ENCODE measurements at regions of chr5 and their contacts with region 1.

Region 1: GRCh38 chr5:141878711-141879425 is 658 bp upstream of the PCDH1 start:
- DNase-seq: peak; percentile 78 to 81
- ATAC-seq: peak; percentile 90 to 92
- H3K4me3 ChIP-seq: peak overlapping the region; percentile 55 to 93 (median 72)
- H3K27ac ChIP-seq: peak overlapping the region; percentile 57 to 82 (median 74)
- H3K4me1 ChIP-seq: peaks cover 28 to 30% of the 10 kb centered on the region in 2 donors
- H3K27me3 ChIP-seq: peaks cover 40 to 55% (median 50%) of the 10 kb centered on the region in 3 donors
- CTCF ChIP-seq: peak; percentile 86 to 98 (median 95)
- POLR2A ChIP-seq: no peak

Region 2: DNA sequence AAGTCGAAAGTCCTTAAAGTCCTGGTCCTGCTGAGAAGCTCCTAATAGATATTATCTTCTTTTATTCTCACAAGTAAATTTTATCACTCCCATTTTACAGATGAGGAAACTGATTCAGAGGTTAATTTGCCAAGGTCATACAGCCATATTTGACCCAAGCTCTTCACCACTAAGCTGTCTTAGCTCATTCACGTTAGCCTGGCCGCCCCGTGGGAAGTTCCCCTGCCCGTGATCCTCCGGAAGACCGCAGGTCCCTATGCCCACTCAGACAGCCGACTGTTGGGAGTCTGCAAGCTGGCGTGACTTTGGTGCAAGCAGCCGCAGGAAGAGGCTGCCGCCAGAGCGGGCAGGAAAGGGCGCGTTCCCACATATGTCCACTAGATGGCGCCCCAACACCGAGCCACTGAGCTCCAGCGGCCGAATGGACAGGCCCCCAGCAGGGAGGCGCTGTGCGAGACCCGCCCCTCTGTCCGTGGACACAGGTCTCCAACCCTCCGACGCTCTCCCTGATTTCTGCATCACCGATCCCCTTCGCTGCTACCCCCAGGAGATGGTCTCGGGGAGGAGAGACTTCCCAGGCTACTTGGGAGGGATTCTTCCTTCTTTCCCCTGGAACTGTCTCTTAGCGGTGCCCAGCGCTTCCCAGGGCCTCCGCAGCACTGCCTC is 186.9 kb before region 1 on chr5:
- in situ Hi-C with region 1: loop called in 1 of 4 experiments (anchors 10 kb)
- intact Hi-C with region 1: loop called (anchors 1 kb)
- DNase-seq: peak; percentile 48 to 69
- ATAC-seq: peak; percentile 88 to 96
- H3K4me3 ChIP-seq: peak overlapping the region in 3 of 4 donors; percentile 30 to 50 (median 43)
- H3K27ac ChIP-seq: no peak overlapping the region
- H3K4me1 ChIP-seq: peaks cover 0 to 4% of the 10 kb centered on the region in 2 donors
- H3K27me3 ChIP-seq: no peaks in the 10 kb centered on the region
- CTCF ChIP-seq: peak; percentile 94 to 99 (median 98)
- POLR2A ChIP-seq: no peak

Region 3: GRCh38 chr5:141765896-141766551 is 112.8 kb before region 1 on chr5:
- in situ Hi-C with region 1: no loop called
- intact Hi-C with region 1: loop called (anchors 5 kb)
- DNase-seq: no peak
- ATAC-seq: no peak
- H3K4me3 ChIP-seq: no peak overlapping the region
- H3K27ac ChIP-seq: no peak overlapping the region
- H3K4me1 ChIP-seq: no peaks in the 10 kb centered on the region
- H3K27me3 ChIP-seq: peaks cover 0 to 5% (median 0%) of the 10 kb centered on the region in 3 donors
- CTCF ChIP-seq: no peak
- POLR2A ChIP-seq: no peak

Region 4: DNA sequence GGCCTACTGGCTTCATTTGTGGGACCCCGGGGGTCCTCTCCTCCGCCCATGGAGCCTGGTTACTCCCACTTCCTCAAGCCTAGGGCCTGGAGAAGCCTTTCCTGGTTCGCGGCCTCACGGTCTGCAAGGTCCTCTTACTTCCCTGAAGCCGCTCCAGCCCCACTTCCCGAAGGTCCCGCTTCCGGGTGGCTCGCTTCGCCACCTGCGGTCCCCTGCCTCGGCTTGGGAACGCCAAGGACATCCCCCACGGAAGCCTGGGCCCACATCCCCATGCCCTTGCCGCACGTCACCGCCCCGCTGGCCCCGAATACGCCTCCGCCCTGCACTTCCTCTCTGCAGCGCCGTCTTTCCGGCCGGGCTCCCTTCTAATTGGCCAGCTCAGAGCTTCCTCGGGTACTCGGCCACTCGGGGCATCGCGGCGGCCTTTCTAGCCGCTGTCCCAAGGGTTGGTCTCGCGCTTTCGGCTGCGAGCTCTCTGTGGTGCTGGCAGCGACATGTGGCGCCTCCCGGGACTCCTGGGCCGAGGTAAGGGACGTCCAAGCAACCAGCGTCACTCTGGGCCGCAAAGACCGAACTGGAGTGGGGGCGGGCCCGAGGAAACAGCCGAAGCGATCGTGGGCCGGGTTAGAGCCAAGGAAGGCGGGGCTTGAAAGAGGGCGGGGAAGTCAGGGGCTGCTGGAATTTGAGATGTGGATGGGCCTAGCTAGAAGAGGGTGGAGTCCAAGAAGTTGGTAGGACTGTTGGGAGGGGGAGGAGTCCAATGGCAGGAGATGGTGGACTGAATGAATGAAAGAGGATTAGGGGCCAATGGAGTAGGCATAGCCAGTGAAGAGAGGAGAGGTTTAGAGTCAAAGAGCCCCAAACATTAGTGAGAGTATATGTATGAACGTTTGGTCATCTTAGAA is 44.8 kb after region 1 on chr5 and contains the start of gene DELE1:
- in situ Hi-C with region 1: no loop called
- intact Hi-C with region 1: loop called (anchors 2 kb)
- DNase-seq: peak; percentile 91 to 93
- ATAC-seq: peak; percentile 96 to 97
- H3K4me3 ChIP-seq: peak within 1 kb of the TSS; percentile 77 to 97 (median 82)
- H3K27ac ChIP-seq: peak within 1 kb of the TSS; percentile 94 to 99 (median 96)
- H3K4me1 ChIP-seq: peaks cover 25 to 46% of the 10 kb centered on the region in 2 donors
- H3K27me3 ChIP-seq: no peaks in the 10 kb centered on the region
- CTCF ChIP-seq: no peak
- POLR2A ChIP-seq: peak; percentile 86 to 88
- total RNA-seq, gene DELE1: 31.3 to 91.6 (median 52.4) TPM

Region 5: DNA sequence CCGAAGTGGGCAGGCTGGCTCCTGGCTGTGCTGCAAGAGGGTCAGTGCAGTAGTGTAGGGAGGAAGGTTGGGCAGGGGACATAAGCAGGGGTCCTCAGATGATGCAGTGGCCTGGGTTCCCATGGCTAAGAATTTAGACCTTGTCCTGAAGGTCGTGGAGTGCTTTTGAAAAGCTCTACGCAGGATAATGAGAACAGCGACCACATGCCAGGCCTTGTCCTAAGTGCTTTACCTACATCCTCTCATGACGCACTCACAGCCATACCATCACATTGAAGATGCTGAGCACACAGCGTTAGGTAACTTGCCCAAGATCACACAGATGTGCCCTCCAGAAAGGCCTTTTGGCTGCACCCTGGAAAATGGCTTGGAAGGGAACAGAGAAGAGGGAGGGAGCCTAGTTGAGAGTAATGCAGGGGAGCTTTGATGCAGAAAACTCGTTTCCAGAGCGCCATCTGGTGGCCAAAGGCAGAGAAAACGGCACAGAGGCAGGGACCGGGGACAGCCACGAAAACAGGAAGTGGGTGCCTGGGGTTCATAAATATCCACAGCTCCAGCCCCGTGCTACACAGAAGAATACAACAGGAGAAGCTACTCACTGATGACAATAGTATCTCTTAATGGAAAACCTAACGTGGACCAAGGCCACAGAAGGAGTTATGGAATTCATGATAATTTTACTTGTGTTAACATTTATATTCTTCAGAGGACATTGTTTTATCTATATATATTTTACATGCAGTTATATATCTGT is 81.8 kb after region 1 on chr5:
- in situ Hi-C with region 1: loop called in 1 of 4 experiments (anchors 10 kb)
- intact Hi-C with region 1: loop called (anchors 2 kb)
- DNase-seq: peak; percentile 72 to 79
- ATAC-seq: peak; percentile 83 to 91
- H3K4me3 ChIP-seq: no peak overlapping the region
- H3K27ac ChIP-seq: peak overlapping the region in 1 of 4 donors; percentile 45
- H3K4me1 ChIP-seq: peaks cover 0 to 3% of the 10 kb centered on the region in 2 donors
- H3K27me3 ChIP-seq: no peaks in the 10 kb centered on the region
- CTCF ChIP-seq: peak; percentile 78 to 87 (median 84)
- POLR2A ChIP-seq: no peak

Measured in gastrocnemius medialis (tissue), 4 donors.